ENCODE measurements at regions of chr10 and their contacts with region 1.

Region 1: DNA sequence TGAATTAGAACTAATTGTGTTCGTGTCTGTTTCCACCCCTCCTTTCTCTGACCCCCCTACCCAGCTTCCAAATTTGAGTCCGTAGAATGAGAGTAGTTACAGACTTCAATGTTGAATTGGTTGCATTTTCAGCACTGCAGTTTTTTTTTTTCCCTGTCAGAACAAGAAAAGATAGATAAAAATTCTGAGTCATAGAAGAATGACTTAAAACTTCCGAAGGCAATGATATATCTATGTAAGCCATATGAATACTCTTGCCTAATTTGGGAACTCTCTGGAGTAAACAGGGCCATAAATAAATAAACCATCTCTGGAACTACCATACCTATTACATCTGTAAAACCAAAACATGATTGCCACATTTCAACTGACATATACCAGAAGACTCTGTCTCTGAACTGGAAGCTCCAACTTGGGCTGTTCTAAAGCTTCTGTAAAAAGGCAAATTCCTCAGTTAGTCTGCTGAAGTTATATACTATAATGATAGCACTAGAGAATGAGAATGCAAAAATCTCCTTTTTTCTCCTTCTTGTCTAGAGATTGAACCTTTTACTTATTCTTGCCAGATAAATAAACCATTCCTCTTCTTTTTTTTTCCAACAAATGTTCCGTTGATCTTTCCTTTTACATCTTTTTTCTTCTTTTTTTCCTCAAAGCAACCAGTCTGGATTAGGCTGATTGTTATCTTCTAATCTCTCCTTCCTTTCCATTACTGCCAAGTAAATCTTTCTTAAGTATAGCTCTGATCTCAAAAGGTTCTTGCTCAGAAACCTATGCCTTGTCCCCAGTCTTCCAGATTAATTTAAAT is 23.5 kb downstream of the VCL start:
- DNase-seq: no peak
- ATAC-seq: no peak

Region 2: GRCh38 chr10:74047868-74048267 is 26.4 kb after region 1 on chr10:
- intact Hi-C with region 1: loop called (anchors 2 kb)
- DNase-seq: no peak
- ATAC-seq: peak; percentile 78

Measured in sciatic nerve (tissue), 2 donors.